GM12878 (cell line): ENCODE measurements at regions of chr7 and their contacts with region 1.

Region 1: GRCh38 chr7:33062782-33063443 is 337 bp upstream of the NT5C3A start:
- DNase-seq: peak; percentile 81
- ATAC-seq: peak; percentile 95
- H3K4me3 ChIP-seq: peak overlapping the region; percentile 93
- H3K27ac ChIP-seq: peak overlapping the region; percentile 89
- H3K4me1 ChIP-seq: peaks cover 3% of the 10 kb centered on the region; the same call in 1 of the 2 replicates
- H3K27me3 ChIP-seq: no peaks in the 10 kb centered on the region
- CTCF ChIP-seq: no peak
- EP300 ChIP-seq: no peak
- POLR2A ChIP-seq: peak; percentile 75
- RAD21 ChIP-seq: no peak

Region 2: GRCh38 chr7:32490127-32490822 is 572.6 kb before region 1 on chr7 and contains the start of gene LSM5:
- CTCF ChIA-PET with region 1: no interaction called
- POLR2A ChIA-PET with region 1: interaction called, 4 read pairs
- RAD21 ChIA-PET with region 1: no interaction called
- SMC1A ChIA-PET with region 1: no interaction called
- in situ Hi-C with region 1: no loop called
- intact Hi-C with region 1: loop called (anchors 5 kb)
- DNase-seq: peak; percentile 80
- ATAC-seq: peak; percentile 85
- H3K4me3 ChIP-seq: peak within 1 kb of the TSS; percentile 84
- H3K27ac ChIP-seq: peak within 1 kb of the TSS; percentile 85
- H3K4me1 ChIP-seq: no peaks in the 10 kb centered on the region
- H3K27me3 ChIP-seq: no peaks in the 10 kb centered on the region
- CTCF ChIP-seq: no peak
- EP300 ChIP-seq: no peak; a peak in 1 of 4 replicates
- POLR2A ChIP-seq: peak; percentile 93
- RAD21 ChIP-seq: no peak
- polyA plus RNA-seq, gene LSM5: 494 to 538 TPM

Region 3: DNA sequence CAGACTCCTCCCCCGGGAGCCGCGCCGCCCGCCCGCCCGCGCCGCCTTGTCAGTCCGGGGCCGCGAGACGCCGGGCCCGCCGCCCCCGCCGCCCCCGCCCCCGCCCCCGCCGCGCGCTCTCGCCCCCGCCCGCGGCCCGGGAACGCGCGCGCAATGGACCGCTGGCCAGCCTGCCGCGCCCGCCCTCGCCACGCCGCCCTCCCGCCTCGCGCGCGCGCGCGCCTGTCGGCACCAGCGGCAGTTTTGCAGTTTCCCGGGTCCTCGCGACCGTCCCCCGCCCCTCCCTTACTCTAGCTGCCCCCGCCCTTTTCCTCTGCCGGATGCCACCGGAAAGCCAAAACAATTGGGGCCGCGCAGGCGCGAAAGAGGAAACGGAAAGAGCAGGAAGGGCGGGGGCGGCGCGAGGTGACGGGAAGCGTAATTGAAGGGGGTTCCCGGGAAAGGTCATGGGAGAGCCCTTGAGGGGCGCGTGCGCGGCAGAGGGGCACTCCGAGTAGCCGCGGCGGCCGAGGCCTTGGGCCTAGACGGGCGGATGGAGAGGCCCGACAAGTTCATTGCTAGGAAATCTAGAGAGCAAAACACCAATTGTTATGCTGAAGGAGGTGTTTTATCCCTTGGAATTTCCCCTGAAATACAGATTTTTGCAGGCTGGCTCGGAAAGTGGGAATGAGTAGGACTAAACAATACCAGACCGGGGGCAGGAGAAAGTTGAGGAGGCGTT is 171.0 kb before region 1 on chr7:
- CTCF ChIA-PET with region 1: no interaction called
- POLR2A ChIA-PET with region 1: interaction called, 4 read pairs
- RAD21 ChIA-PET with region 1: no interaction called
- SMC1A ChIA-PET with region 1: no interaction called
- in situ Hi-C with region 1: no loop called
- intact Hi-C with region 1: loop called (anchors 5 kb)
- DNase-seq: peak; percentile 84
- ATAC-seq: peak; percentile 82
- H3K4me3 ChIP-seq: peak overlapping the region; percentile 62
- H3K27ac ChIP-seq: peak overlapping the region; percentile 99
- H3K4me1 ChIP-seq: peaks cover 10% of the 10 kb centered on the region; the same call in 1 of the 2 replicates
- H3K27me3 ChIP-seq: no peaks in the 10 kb centered on the region
- CTCF ChIP-seq: no peak
- EP300 ChIP-seq: no peak
- POLR2A ChIP-seq: peak; percentile 47
- RAD21 ChIP-seq: no peak

Region 4: DNA sequence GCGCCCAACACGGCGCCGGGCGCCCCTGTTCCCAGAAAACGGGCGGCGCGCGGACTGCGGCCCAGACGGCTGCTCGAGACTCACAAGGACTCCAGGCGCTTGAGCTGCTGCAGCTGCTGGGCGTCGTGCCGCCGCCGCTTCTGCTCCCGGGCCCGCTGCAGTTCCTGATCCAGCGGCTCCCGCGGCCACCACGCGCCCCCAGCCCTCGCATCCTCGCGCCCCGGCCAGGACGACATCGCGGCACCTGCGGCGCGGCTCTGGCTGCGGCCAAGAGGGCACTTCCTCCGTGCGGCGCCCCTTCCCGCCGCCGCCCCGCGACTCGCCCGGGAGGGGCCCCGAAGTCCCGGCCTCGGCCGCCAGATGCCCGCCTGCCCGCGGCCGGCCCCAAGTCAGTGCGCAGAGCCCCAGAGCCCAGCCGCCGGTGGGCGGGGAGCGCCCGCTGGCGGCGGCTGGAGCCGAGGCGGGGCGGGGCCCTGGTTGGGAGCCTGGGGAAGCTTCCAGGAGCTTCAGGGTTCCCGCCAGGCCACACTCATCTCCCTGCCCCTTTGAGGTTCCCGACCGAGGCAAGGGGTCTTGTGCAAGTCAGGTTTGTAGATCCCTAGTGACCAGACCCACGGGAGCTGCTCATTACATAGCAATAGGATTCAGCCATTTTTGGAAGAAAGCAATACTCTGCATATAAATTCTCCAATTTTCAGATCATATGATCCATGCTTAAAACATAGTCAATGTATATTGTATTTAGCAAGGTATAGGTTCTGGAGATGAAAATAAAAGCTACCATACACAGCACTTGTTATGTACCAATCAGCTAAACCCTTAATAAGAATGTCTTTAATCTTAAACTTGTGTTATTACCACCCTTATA is 119.9 kb before region 1 on chr7:
- CTCF ChIA-PET with region 1: no interaction called
- POLR2A ChIA-PET with region 1: no interaction called
- RAD21 ChIA-PET with region 1: no interaction called
- SMC1A ChIA-PET with region 1: no interaction called
- in situ Hi-C with region 1: no loop called
- intact Hi-C with region 1: no loop called
- DNase-seq: no peak
- ATAC-seq: peak; percentile 96
- H3K4me3 ChIP-seq: peak overlapping the region; percentile 86
- H3K27ac ChIP-seq: peak overlapping the region; percentile 46; the same call in 1 of the 2 replicates
- H3K4me1 ChIP-seq: no peaks in the 10 kb centered on the region; the same call in none of the 2 replicates
- H3K27me3 ChIP-seq: no peaks in the 10 kb centered on the region; a peak in 1 of 4 replicates
- CTCF ChIP-seq: peak; percentile 56 to 78 (median 64); a peak in 5 of 6 replicates
- EP300 ChIP-seq: no peak
- POLR2A ChIP-seq: peak; percentile 42
- RAD21 ChIP-seq: peak; percentile 78

Region 5: DNA sequence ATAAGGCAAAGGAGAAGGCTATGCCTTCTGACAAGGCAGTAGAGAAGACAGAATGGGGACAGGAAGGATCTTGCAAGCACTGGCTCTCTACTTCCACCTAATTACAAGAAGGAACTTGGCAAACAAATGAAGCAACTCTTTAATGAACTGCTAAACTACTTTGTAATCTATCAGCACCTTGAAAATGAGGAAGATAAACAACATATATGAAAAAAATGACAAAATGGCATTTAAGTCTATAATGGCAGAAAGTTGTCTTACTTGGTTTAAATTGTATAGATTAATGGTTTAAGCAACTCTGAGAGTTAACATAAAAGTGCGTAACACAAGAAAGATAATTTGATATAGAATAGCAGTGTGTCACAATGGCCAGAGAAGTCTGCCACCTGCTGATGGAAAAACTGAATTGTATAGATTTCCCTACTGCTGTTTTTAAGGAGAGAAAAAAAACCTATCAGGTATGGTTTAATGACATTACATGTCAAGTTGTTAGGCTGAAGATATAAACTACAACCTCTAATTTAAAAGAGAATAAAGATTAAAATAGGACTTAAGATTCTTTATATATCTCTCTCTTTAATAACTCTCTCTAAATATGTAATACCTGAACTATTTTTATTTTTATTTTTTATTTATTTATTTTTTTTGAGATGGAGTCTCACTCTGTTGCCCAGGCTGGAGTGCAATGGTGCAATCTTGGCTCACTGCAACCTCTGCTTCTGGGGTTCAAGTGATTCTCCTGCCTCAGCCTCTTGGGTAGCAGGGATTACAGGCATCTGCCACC is 12.2 kb before region 1 on chr7:
- CTCF ChIA-PET with region 1: interaction called, 19 read pairs
- POLR2A ChIA-PET with region 1: interaction called, 7 read pairs
- RAD21 ChIA-PET with region 1: interaction called, 5 read pairs
- SMC1A ChIA-PET with region 1: interaction called, 8 read pairs
- in situ Hi-C with region 1: no loop called
- intact Hi-C with region 1: no loop called
- DNase-seq: no peak
- ATAC-seq: peak; percentile 67
- H3K4me3 ChIP-seq: peak overlapping the region; percentile 25; the same call in 1 of the 2 replicates
- H3K27ac ChIP-seq: peak overlapping the region; percentile 56; the same call in 1 of the 2 replicates
- H3K4me1 ChIP-seq: peaks cover 21% of the 10 kb centered on the region
- H3K27me3 ChIP-seq: no peaks in the 10 kb centered on the region
- CTCF ChIP-seq: peak; percentile 50 to 62 (median 58)
- EP300 ChIP-seq: no peak
- POLR2A ChIP-seq: no peak
- RAD21 ChIP-seq: peak; percentile 69

Region 6: DNA sequence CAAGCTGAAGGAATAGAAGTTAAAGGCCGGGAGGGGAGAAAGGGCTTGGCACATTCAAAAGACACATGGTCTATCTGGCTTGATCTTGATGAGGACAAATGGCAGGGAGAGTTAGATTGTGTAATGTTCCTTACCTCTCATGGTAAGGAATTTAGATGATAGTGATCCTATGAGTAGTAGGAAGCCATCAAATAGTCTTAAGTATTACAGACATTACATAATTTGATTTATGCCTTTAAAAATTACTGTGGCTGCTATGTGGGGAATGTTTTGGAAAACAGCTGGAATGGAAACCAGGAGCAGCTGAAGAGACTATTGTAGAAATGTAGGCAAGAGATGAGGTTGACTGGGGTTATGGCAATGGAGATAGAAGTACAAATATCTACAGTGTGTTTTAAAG is 491.1 kb after region 1 on chr7:
- CTCF ChIA-PET with region 1: no interaction called
- POLR2A ChIA-PET with region 1: no interaction called
- RAD21 ChIA-PET with region 1: no interaction called
- SMC1A ChIA-PET with region 1: no interaction called
- in situ Hi-C with region 1: no loop called
- intact Hi-C with region 1: no loop called
- DNase-seq: no peak
- ATAC-seq: no peak
- H3K4me3 ChIP-seq: no peak overlapping the region
- H3K27ac ChIP-seq: no peak overlapping the region
- H3K4me1 ChIP-seq: no peaks in the 10 kb centered on the region
- H3K27me3 ChIP-seq: no peaks in the 10 kb centered on the region
- CTCF ChIP-seq: no peak
- EP300 ChIP-seq: no peak
- POLR2A ChIP-seq: no peak
- RAD21 ChIP-seq: no peak